HEK293 (cell line): ENCODE measurements at regions of chr18 and their contacts with region 1.

Region 1: GRCh38 chr18:63505566-63506335 is 29.0 kb downstream of the SERPINB5 start:
- H3K4me3 ChIP-seq: no peak overlapping the region
- H3K27ac ChIP-seq: no peak overlapping the region
- H3K4me1 ChIP-seq: no peaks in the 10 kb centered on the region
- CTCF ChIP-seq: 0 out of 2 replicates have a peak, but pooled peaks have one; percentile 27

Region 2: GRCh38 chr18:63487676-63488075 is 18.1 kb before region 1 on chr18:
- CTCF ChIA-PET with region 1: interaction called, 27 read pairs
- POLR2A ChIA-PET with region 1: no interaction called
- H3K4me3 ChIP-seq: no peak overlapping the region
- H3K27ac ChIP-seq: no peak overlapping the region
- H3K4me1 ChIP-seq: no peaks in the 10 kb centered on the region
- CTCF ChIP-seq: no peak

Region 3: GRCh38 chr18:63492851-63493250 is 12.9 kb before region 1 on chr18:
- CTCF ChIA-PET with region 1: interaction called, 27 read pairs
- POLR2A ChIA-PET with region 1: no interaction called
- H3K4me3 ChIP-seq: no peak overlapping the region
- H3K27ac ChIP-seq: no peak overlapping the region
- H3K4me1 ChIP-seq: no peaks in the 10 kb centered on the region
- CTCF ChIP-seq: no peak

Region 4: GRCh38 chr18:63590373-63590772 is 84.6 kb after region 1 on chr18:
- CTCF ChIA-PET with region 1: no interaction called
- POLR2A ChIA-PET with region 1: no interaction called
- H3K4me3 ChIP-seq: no peak overlapping the region
- H3K27ac ChIP-seq: no peak overlapping the region
- H3K4me1 ChIP-seq: no peaks in the 10 kb centered on the region
- CTCF ChIP-seq: no peak